Aorta (tissue), 5 donors: ENCODE measurements at regions of chr11 and their contacts with region 1.

Region 1: DNA sequence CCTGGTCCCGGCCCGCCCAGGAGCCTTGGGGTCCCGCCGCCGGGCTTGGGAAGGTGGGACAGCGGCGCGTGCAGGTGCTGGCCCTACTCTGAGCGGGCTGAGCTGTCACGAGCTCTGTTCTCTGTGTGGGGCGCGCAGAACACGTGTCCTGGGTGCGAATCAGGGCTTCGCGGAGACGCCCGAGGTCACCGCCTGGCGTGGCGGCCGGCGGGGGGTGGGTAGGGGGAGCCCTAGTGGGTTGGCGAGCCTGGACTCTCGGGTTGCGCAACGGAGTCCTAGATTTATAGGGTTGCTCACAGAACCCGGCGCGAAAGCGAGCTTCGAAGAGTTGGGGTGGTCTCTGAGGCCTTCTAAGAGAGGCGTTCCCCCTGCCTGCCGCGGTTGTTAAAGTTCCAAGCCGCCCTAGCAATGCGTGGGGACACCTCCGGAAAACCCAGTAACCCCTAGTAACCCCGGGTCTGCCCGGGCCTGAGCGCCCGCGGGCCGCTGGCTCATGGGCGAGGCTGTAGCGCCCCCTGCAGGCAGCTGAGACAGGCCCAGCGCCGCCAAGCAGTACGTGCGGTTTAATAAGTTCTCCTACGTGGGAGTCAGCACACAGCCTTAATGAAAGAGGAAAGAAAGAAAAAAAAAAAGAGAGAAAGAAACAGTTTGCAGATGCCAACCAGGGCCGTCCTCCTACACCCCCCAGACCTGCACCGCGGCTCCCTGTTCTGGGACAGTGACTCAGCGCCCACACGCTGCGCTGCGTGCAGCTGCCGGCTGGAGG is 2.8 kb downstream of the ADM start:
- DNase-seq: peak; percentile 94 to 95
- ATAC-seq: peak; percentile 83
- H3K4me3 ChIP-seq: peak overlapping the region in 1 of 2 donors; percentile 37
- H3K27ac ChIP-seq: no peak overlapping the region
- H3K4me1 ChIP-seq: no peaks in the 10 kb centered on the region
- H3K27me3 ChIP-seq: no peaks in the 10 kb centered on the region

Region 2: DNA sequence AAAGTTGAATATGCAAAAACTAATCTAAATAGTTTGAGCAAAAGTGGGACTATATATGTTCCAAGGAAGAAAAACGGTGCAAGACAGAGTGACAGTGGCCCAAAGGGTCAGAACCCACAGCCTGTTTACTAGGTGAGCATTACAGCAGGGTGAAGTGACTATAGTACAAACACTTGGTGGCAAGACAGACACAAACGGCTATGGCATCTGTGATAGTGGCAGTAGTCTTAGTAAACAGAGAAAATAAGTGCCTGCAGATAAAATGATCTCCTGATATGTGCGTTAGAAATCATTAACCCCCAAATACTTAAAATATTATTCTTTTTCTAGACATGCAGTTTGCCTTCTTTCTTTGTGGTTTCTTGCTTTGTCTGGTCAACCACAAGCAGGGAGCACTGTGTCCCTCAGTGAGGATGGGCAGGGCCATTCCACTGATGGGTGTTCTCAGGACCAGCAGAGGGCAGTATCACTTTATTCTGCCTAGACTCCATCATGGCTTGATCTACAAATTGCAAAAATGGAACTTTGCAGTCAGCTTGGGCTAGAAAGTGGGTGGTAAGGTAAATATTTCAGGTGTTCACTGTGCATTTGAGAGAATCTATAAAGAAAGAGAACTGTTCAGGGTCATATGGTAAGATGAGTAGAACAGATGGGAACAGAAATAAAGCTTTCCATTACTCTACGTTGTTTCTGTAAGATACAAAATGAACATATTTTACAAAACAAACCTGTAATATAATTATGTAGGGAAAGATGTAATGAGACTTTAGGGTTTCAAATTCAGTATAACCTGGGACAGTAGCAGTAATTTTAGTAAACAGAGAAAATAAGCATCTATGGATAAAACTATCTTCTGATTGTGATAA is 445.5 kb before region 1 on chr11:
- intact Hi-C with region 1: loop called in 1 of 2 experiments (anchors 10 kb)
- DNase-seq: no peak
- ATAC-seq: peak; percentile 86
- H3K4me3 ChIP-seq: no peak overlapping the region
- H3K27ac ChIP-seq: no peak overlapping the region
- H3K4me1 ChIP-seq: no peaks in the 10 kb centered on the region
- H3K27me3 ChIP-seq: no peaks in the 10 kb centered on the region

Region 3: DNA sequence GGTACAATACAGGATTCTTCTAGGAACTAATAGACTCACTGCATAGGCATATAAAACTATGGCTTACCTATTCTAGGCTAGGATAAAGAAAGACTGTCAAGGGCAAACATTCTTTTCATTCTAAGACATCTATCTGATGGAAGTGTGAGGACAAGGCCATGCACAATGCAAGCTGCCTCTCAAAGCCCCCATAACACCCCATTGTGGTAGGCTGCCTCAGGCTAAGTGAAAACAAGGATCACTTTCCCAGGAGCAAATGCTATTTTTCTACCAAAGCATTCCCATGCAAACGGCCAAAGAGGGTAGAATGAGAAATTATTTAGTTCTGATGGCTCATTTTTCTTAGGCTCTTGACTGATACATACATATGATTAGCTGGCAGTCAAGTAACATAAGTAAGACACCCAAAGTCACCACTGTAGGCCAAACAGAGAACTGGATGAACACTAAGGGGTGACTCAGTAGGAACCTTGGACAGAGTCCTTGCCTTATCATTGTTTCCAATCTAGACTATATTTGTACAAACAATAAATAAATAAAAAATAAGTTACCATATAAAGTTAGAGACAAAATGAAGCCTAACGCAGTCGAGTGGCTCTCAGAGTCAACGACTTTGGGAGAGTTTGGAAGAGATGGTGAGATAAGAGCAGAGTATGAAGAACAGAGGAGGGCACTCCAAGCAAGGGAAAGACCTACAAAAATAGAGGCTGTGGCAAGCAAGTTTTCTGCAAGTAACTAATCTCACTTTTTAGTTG is 317.2 kb before region 1 on chr11:
- intact Hi-C with region 1: loop called in 1 of 2 experiments (anchors 10 kb)
- DNase-seq: no peak
- ATAC-seq: peak; percentile 56
- H3K4me3 ChIP-seq: no peak overlapping the region
- H3K27ac ChIP-seq: no peak overlapping the region
- H3K4me1 ChIP-seq: no peaks in the 10 kb centered on the region
- H3K27me3 ChIP-seq: no peaks in the 10 kb centered on the region

Region 4: DNA sequence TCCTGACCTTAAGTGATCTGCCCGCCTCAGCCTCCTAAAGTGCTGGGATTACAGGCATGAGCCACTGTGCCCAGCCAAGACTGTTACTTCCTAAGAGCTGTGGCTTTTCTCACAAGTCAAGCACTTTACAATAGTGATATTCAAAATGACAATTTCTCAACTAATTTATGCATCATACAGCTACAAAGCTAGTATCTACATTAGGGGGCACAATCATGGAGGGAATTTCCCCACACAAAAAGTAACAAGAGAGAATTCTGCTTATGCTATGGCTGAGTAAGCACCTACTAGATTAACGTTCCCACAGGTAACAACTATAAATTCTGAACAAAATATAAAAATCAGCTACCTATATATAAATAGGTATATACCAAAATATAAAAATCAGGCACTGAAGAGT is 86.3 kb before region 1 on chr11:
- intact Hi-C with region 1: loop called in 1 of 2 experiments (anchors 5 kb)
- DNase-seq: no peak
- ATAC-seq: no peak
- H3K4me3 ChIP-seq: no peak overlapping the region
- H3K27ac ChIP-seq: no peak overlapping the region
- H3K4me1 ChIP-seq: no peaks in the 10 kb centered on the region
- H3K27me3 ChIP-seq: no peaks in the 10 kb centered on the region

Region 5: DNA sequence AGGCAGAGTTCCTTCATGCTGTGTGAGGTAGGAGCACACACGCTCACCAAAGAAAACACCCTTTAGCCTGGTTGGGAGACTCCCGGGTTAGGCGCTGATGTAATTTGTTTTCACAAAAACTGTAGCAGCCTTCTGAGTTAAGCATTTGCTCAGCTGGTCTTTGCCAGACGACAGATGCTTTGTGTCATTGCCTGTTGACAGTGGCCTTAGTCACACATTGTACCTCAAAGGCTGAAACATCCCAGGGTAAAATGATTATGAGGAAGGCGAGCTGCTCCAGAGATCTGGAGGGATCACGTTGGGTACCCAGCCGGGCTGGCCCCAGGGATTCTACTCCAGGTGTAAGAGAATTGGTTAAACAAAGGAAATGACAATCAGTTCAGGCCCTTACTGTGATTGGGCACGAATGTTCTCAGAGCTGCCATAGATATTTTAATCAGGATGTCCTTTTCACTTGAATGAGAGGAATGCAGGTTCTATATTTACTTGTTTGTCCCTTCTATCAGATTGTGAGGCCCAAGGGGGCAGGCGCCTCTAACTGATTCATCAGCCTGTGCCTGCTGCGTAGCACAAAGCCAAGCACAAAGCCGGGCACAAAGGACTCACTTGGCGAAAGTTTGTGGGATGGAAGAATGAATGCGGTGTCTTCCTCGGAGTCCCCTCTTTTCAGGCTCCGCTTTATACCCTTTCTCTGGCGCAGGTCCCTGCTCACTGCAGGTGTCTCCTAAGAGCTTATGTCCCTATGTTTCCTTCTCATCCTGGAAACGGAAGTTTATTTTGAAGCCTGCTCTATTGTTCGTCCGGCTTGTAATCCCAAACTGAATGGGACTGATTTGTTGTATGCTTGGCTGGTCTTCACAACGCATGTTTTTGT is 44.4 kb after region 1 on chr11:
- intact Hi-C with region 1: no loop called
- DNase-seq: peak; percentile 59 to 75
- ATAC-seq: peak; percentile 89
- H3K4me3 ChIP-seq: no peak overlapping the region
- H3K27ac ChIP-seq: peak overlapping the region in 1 of 2 donors; percentile 25
- H3K4me1 ChIP-seq: peaks cover 0 to 4% of the 10 kb centered on the region in 2 donors
- H3K27me3 ChIP-seq: no peaks in the 10 kb centered on the region

Region 6: GRCh38 chr11:10561043-10561818 is 253.6 kb after region 1 on chr11:
- intact Hi-C with region 1: no loop called
- DNase-seq: no peak
- ATAC-seq: no peak
- H3K4me3 ChIP-seq: no peak overlapping the region
- H3K27ac ChIP-seq: no peak overlapping the region
- H3K4me1 ChIP-seq: peaks cover 0 to 4% of the 10 kb centered on the region in 2 donors
- H3K27me3 ChIP-seq: no peaks in the 10 kb centered on the region